ENCODE measurements at regions of chr19 and their contacts with region 1.

Region 1: DNA sequence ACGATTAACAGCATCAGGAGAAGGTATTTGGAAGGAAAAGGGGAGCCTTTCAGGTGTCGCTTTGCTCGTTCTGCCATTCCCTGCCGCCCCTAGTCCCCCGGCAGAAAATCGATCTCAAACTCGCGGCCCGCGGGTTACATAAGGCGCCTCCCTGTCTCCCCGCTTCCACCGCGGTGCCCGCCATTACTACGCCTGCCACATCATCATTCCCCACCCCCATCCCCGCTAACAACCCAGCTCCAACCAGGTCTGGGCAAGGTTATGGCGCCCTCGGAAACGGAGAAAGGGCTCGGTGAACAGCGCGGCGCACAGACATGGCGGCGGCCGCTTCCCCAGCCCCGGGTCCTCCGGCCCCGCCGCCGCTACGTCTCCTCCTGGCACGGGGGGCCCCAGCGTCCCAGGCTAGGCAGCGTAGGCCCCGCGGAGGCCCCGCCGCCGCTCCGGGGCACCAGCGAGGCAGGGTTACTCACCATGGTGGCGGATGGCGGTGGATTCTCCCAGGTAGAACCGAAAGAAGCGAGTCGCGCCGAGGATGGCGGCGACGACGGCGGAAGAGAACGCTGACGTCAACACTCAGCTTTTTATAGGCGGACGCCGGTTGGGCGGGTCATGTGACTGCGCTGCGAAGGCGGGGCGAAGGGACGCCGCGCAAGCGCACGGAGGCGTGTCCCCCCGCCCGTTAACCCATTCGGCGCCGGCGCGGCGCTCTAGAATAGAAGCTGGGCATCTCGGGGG is at the start of gene EEF2:
- DNase-seq: peak; percentile 48
- ATAC-seq: peak; percentile 32
- H3K4me3 ChIP-seq: peak within 1 kb of the TSS; percentile 97
- H3K27ac ChIP-seq: peak within 1 kb of the TSS; percentile 79
- H3K4me1 ChIP-seq: peaks cover 25% of the 10 kb centered on the region
- H3K27me3 ChIP-seq: no peaks in the 10 kb centered on the region
- CTCF ChIP-seq: no peak
- EP300 ChIP-seq: 0 out of 4 replicates have a peak, but pooled peaks of 1 of the 2 experiments have one; percentile 22
- POLR2A ChIP-seq: peak; percentile 100
- RAD21 ChIP-seq: no peak
- polyA plus RNA-seq, gene EEF2: 513 to 937 TPM

Region 2: DNA sequence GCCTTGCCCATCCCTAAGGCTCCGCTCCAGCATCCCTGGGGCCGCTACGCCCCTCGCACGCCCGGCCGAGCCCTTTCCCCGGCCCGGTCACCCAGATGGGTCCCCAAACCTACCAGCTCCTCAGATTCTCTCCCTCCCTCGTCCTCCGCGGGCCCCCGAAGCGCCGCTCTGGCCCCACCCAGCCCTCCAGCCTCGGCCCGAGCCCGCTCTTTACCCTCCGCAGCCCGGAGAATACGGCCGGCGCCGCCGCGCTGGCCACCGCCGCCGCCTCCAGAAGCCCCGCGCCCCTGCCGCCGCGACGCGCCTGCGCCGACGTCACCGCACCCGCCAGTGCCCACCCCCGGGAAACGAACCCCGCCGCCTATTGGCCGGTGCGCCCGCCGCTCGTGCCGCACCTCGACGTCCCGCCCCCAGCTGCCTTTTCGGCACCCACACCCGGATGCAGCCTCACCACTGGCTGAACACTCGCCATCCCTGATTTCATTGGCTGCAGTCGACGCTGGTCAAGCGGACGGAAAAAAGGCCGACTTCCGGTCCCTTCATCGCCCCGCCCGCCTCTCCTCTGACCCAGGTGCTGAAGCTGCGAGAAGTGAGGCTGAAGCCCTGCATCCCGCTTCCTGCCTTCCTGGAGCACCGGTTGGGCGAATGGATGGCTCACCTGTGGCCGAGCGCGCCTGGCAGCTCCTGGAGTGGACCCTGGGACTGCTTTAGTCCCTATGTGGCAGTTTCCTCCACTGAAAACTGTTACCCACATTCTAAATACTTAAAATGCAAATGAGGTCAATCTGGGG is 14.1 kb before region 1 on chr19 and contains the start of gene DAPK3:
- CTCF ChIA-PET with region 1: interaction called, 8 read pairs
- POLR2A ChIA-PET with region 1: interaction called, 12 read pairs
- RAD21 ChIA-PET with region 1: interaction called, 8 read pairs
- SMC1A ChIA-PET with region 1: interaction called, 9 read pairs
- in situ Hi-C with region 1: no loop called
- intact Hi-C with region 1: no loop called
- DNase-seq: peak; percentile 91
- ATAC-seq: peak; percentile 95
- H3K4me3 ChIP-seq: peak within 1 kb of the TSS; percentile 90
- H3K27ac ChIP-seq: peak within 1 kb of the TSS; percentile 62
- H3K4me1 ChIP-seq: peaks cover 3% of the 10 kb centered on the region
- H3K27me3 ChIP-seq: no peaks in the 10 kb centered on the region
- CTCF ChIP-seq: no peak
- EP300 ChIP-seq: no peak
- POLR2A ChIP-seq: peak; percentile 76
- RAD21 ChIP-seq: no peak
- polyA plus RNA-seq, gene DAPK3: 0.13 to 0.53 TPM

Region 3: DNA sequence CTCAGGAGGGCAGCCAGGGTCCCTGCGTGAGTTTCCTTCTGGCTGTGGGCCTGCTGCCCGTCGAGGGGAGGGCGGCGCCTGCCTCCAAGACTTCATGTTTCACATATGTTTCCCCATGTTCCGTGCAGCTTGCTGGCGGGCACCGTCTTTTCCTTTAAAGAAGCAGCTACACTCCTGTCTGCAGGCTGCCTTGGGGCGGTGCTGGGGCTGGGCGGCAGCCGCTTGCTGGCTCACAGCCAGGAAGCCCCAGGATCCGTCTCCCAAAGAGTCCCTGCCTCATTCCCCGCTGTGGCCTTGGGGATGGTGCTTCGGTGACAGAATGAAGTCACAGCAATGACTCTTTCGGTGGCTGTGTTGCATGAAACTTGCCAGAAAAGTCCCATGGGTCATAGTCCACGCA is 47.4 kb after region 1 on chr19:
- CTCF ChIA-PET with region 1: no interaction called
- POLR2A ChIA-PET with region 1: no interaction called
- RAD21 ChIA-PET with region 1: no interaction called
- SMC1A ChIA-PET with region 1: no interaction called
- in situ Hi-C with region 1: no loop called
- intact Hi-C with region 1: no loop called
- DNase-seq: no peak
- ATAC-seq: no peak
- H3K4me3 ChIP-seq: no peak overlapping the region
- H3K27ac ChIP-seq: no peak overlapping the region
- H3K4me1 ChIP-seq: no peaks in the 10 kb centered on the region
- H3K27me3 ChIP-seq: no peaks in the 10 kb centered on the region
- CTCF ChIP-seq: no peak
- EP300 ChIP-seq: no peak
- POLR2A ChIP-seq: no peak
- RAD21 ChIP-seq: no peak

Region 4: GRCh38 chr19:4065430-4066175 is 80.5 kb after region 1 on chr19:
- CTCF ChIA-PET with region 1: interaction called, 12 read pairs
- POLR2A ChIA-PET with region 1: interaction called, 11 read pairs
- RAD21 ChIA-PET with region 1: interaction called, 4 read pairs
- SMC1A ChIA-PET with region 1: no interaction called
- in situ Hi-C with region 1: loop called (anchors 5 kb)
- intact Hi-C with region 1: loop called (anchors 5 kb)
- DNase-seq: peak; percentile 65
- ATAC-seq: peak; percentile 70
- H3K4me3 ChIP-seq: no peak overlapping the region
- H3K27ac ChIP-seq: peak overlapping the region; percentile 90; the same call in 1 of the 2 replicates
- H3K4me1 ChIP-seq: peaks cover 24% of the 10 kb centered on the region
- H3K27me3 ChIP-seq: no peaks in the 10 kb centered on the region; a peak in 1 of 4 replicates
- CTCF ChIP-seq: no peak
- EP300 ChIP-seq: no peak
- POLR2A ChIP-seq: peak; percentile 46
- RAD21 ChIP-seq: no peak

Region 5: DNA sequence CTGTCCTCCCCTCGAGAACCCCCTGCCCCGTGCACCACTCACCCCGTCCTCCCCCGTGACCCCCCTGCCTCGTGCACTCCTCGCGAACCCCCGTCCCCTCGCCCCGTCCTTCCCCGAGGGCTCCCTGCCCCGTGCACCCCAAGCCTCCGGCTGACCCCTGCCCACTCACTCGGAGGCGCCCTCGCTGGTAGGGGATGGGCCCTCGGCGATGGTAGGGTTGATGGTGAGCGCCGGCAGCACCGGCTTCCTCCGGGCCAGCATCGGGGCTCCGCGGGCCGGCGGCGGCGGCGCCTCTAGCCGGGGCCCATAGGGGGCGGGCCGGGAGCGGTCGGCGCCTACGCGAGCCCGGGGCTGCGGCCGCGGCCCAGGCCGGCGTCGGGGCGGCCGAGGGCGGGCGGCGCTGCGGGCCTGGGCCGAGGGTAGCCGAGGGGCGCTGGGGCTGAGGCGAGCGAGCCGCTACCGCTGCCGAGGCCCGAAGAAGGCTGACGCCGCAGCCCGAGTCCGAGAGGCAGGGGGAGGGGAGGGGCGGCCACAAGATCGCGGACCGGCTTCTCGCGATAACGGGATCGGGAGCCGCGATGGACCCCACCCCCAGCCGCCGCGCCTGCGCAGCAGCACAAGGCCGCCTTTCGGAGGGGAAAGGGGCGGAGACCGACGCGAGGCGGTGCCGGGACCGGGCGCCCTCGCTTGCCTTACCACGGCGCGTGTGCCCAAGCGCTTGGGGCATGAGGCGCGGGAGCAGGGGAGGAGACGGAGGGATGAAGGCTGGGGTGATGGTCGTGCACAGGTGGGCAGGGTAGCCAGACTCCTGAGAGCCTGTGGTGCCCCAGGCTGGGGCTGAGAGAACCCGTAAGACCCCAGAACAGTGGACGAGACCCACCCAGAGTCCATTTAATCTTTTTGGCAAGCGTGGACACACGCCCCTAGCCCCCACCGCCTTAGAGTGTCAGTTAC is 138.8 kb after region 1 on chr19 and contains the start of gene MAP2K2:
- CTCF ChIA-PET with region 1: interaction called, 8 read pairs
- POLR2A ChIA-PET with region 1: interaction called, 3 read pairs
- RAD21 ChIA-PET with region 1: no interaction called
- SMC1A ChIA-PET with region 1: no interaction called
- in situ Hi-C with region 1: no loop called
- intact Hi-C with region 1: loop called (anchors 5 kb)
- DNase-seq: peak; percentile 60
- ATAC-seq: peak; percentile 97
- H3K4me3 ChIP-seq: peak within 1 kb of the TSS; percentile 99
- H3K27ac ChIP-seq: peak within 1 kb of the TSS; percentile 78
- H3K4me1 ChIP-seq: no peaks in the 10 kb centered on the region; the same call in 1 of the 2 replicates
- H3K27me3 ChIP-seq: no peaks in the 10 kb centered on the region
- CTCF ChIP-seq: no peak
- EP300 ChIP-seq: no peak
- POLR2A ChIP-seq: peak; percentile 87
- RAD21 ChIP-seq: no peak
- polyA plus RNA-seq, gene MAP2K2: 1.00 to 6.8 TPM

Region 6: GRCh38 chr19:4199699-4200293 is 214.7 kb after region 1 on chr19:
- CTCF ChIA-PET with region 1: interaction called, 23 read pairs
- POLR2A ChIA-PET with region 1: interaction called, 5 read pairs
- RAD21 ChIA-PET with region 1: interaction called, 9 read pairs
- SMC1A ChIA-PET with region 1: interaction called, 7 read pairs
- in situ Hi-C with region 1: no loop called
- intact Hi-C with region 1: loop called (anchors 5 kb)
- DNase-seq: no peak
- ATAC-seq: no peak
- H3K4me3 ChIP-seq: no peak overlapping the region
- H3K27ac ChIP-seq: no peak overlapping the region
- H3K4me1 ChIP-seq: no peaks in the 10 kb centered on the region
- H3K27me3 ChIP-seq: no peaks in the 10 kb centered on the region; a peak in 1 of 4 replicates
- CTCF ChIP-seq: 0 out of 6 replicates have a peak, but pooled peaks of 1 of the 3 experiments have one; percentile 7
- EP300 ChIP-seq: no peak
- POLR2A ChIP-seq: no peak
- RAD21 ChIP-seq: no peak

Region 7: GRCh38 chr19:4400135-4400936 is 415.3 kb after region 1 on chr19 and contains the start of gene SH3GL1:
- CTCF ChIA-PET with region 1: no interaction called
- POLR2A ChIA-PET with region 1: no interaction called
- RAD21 ChIA-PET with region 1: interaction called, 3 read pairs
- SMC1A ChIA-PET with region 1: no interaction called
- in situ Hi-C with region 1: no loop called
- intact Hi-C with region 1: loop called (anchors 5 kb)
- DNase-seq: peak; percentile 48
- ATAC-seq: peak; percentile 57
- H3K4me3 ChIP-seq: peak within 1 kb of the TSS; percentile 81
- H3K27ac ChIP-seq: peak within 1 kb of the TSS; percentile 92
- H3K4me1 ChIP-seq: peaks cover 3% of the 10 kb centered on the region; the same call in 1 of the 2 replicates
- H3K27me3 ChIP-seq: no peaks in the 10 kb centered on the region
- CTCF ChIP-seq: peak; percentile 93 to 98 (median 95)
- EP300 ChIP-seq: peak in 1 of 2 experiments; percentile 10; a peak in 1 of 4 replicates
- POLR2A ChIP-seq: peak; percentile 80
- RAD21 ChIP-seq: peak; percentile 63
- polyA plus RNA-seq, gene SH3GL1: 0.93 to 3.0 TPM

Measured in GM12878 (cell line).